IMR-90 (cell line): ENCODE measurements at regions of chr20 and their contacts with region 1.

Region 1: GRCh38 chr20:266596-267562 is 9.4 kb downstream of the DEFB132 start:
- DNase-seq: peak; percentile 62
- ATAC-seq: peak; percentile 98
- H3K4me3 ChIP-seq: peak overlapping the region; percentile 50
- H3K27ac ChIP-seq: no peak overlapping the region
- H3K4me1 ChIP-seq: no peaks in the 10 kb centered on the region
- H3K27me3 ChIP-seq: peaks cover 10% of the 10 kb centered on the region; the same call in 1 of the 2 replicates
- CTCF ChIP-seq: peak; percentile 89
- POLR2A ChIP-seq: no peak
- RAD21 ChIP-seq: peak; percentile 82

Region 2: DNA sequence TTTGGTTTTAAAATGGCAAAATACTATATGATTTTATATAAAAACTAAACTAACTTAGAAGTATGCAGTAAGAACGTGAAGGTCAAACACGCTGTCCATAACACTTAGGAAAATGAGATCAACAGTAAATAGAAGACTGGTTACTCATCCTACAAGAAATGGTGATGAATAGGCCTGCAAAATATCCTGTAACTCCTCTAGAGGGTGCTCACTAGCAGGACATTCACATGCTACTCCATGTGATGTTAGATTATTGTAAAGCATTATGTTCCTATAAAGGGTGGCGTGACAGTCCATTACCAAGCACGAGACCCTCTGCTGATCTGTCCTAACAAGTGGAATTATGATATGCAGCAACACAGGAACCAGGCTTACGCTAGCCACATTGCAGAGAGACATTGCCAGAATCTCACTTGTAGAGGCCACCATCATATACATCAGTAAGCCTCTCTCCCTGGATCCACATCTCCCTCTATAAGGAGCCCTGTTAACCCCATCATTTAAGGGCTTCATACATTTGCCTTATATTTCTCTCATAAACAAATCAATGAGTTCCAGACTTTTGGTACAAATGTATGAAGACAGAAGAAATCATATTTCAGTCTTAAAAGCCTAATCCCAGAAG is 57.8 kb before region 1 on chr20:
- CTCF ChIA-PET with region 1: interaction called, 3 read pairs
- POLR2A ChIA-PET with region 1: no interaction called
- dilution Hi-C with region 1: no loop called
- in situ Hi-C with region 1: no loop called
- intact Hi-C with region 1: loop called (anchors 2 kb)
- DNase-seq: peak; percentile 79
- ATAC-seq: peak; percentile 98
- H3K4me3 ChIP-seq: no peak overlapping the region
- H3K27ac ChIP-seq: no peak overlapping the region
- H3K4me1 ChIP-seq: no peaks in the 10 kb centered on the region
- H3K27me3 ChIP-seq: peaks cover 10% of the 10 kb centered on the region
- CTCF ChIP-seq: peak; percentile 70
- POLR2A ChIP-seq: no peak
- RAD21 ChIP-seq: peak; percentile 71